BJ (cell line): ENCODE measurements at regions of chr12 and their contacts with region 1.

Region 1: GRCh38 chr12:122526683-122527477 is at the starts of genes KNTC1 and RSRC2:
- DNase-seq: peak; percentile 99
- H3K4me3 ChIP-seq: peak within 1 kb of the TSS; percentile 89
- H3K27me3 ChIP-seq: no peaks in the 10 kb centered on the region
- CTCF ChIP-seq: no peak
- polyA plus RNA-seq, gene KNTC1: 12.5 and 13.6 TPM in 2 replicates
- polyA plus RNA-seq, gene RSRC2: 13.4 and 24.3 TPM in 2 replicates

Region 2: GRCh38 chr12:122282066-122282465 is 244.8 kb before region 1 on chr12:
- CTCF ChIA-PET with region 1: no interaction called
- POLR2A ChIA-PET with region 1: no interaction called
- DNase-seq: peak; percentile 41
- H3K4me3 ChIP-seq: no peak overlapping the region
- H3K27me3 ChIP-seq: no peaks in the 10 kb centered on the region
- CTCF ChIP-seq: no peak

Region 3: DNA sequence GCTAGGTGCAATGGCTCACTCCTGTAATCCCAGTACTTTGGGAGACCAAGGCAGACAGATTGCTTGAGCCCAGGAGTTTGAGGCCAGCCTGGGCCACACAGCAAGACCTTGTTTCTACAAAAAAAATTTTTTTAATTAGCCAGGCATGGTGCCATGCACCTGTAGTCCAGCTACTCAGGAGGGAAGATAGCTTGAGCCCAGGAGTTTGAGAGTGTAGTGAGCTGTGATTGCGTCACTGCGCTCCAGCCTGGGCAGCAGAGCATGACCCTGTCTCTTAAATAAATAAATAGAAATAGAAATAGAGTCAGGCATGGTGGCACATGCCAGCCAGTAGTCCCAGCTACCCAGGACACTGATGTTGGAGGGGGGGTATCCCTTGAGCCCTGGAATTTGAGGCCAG is 67.7 kb before region 1 on chr12:
- CTCF ChIA-PET with region 1: no interaction called
- POLR2A ChIA-PET with region 1: no interaction called
- DNase-seq: no peak
- H3K4me3 ChIP-seq: no peak overlapping the region
- H3K27me3 ChIP-seq: no peaks in the 10 kb centered on the region
- CTCF ChIP-seq: no peak

Region 4: GRCh38 chr12:122593910-122594309 is 67.0 kb after region 1 on chr12:
- CTCF ChIA-PET with region 1: no interaction called
- POLR2A ChIA-PET with region 1: interaction called, 14 read pairs
- DNase-seq: no peak
- H3K4me3 ChIP-seq: no peak overlapping the region
- H3K27me3 ChIP-seq: no peaks in the 10 kb centered on the region
- CTCF ChIP-seq: no peak